Activated CD4-positive, alpha-beta T cell treated with anti-CD3 and anti-CD28 coated beads for 36 hours (primary cell): ENCODE measurements at regions of chr6 and their contacts with region 1.

Region 1: DNA sequence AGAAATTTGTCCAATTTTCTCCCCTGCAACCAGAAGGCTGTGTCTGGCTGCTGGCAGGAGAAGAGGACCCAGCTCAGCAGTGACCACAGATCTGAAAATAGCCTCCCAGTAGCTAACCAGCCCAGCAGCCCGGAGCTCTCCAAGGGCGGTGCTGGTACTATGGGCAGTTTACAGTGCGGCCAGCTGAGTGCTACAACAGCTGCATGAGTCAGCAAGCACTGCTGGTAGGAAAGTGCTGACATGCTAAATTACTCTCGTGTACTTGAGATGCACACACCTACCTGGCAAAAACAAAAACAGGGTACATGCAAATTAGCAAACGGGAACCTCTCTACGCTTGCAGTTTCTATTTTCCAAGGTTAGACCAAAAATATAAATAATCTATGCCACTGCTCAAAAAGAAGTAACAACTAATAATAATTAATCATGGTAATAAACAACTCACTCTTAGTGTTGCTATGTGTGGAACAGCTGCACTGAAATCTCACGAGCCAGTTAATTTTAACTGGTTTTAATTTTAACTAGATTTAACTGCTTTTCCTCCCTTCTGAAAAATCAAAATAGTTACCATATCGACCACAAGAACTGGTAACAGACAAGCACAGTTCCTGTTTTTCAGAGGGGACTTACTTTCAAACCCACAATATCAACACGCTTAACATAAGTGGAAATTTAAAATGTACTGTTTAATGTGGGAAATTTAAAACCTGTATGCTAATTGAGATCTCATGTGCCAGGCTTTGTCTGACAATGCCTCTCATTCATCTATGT is 10.8 kb downstream of the BACH2 start:
- DNase-seq: peak; percentile 75
- ATAC-seq: peak; percentile 40
- H3K4me3 Mint-ChIP-seq: peak overlapping the region; percentile 62
- H3K27ac Mint-ChIP-seq: peak overlapping the region; percentile 95
- H3K4me1 Mint-ChIP-seq: peaks cover 93% of the 10 kb centered on the region
- H3K27me3 Mint-ChIP-seq: no peaks in the 10 kb centered on the region

Region 2: DNA sequence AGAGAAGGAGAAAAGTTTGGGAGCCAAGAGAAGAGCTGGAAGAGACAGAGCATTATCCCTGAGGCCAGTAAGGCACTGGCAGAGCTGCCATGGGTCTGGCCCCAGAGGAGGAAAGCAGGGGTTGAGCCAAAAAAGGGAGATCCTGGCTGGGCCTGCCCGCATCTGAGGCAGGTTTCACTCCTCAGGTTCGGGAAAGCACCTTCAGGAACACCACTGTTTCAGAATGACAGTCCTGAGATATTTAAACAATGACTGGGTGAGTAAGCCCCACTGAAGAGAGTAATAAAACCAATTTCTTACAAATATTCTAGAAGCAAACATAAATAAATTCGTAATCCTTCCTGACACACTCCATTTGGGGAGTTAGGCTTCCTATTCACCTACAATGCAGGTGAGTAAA is 141.4 kb before region 1 on chr6:
- CTCF ChIA-PET with region 1: no interaction called
- POLR2A ChIA-PET with region 1: interaction called, 3 read pairs
- intact Hi-C with region 1: loop called in 1 of 2 experiments (anchors 1 kb)
- DNase-seq: peak; percentile 75
- ATAC-seq: peak; percentile 75
- H3K4me3 Mint-ChIP-seq: peak overlapping the region; percentile 32
- H3K27ac Mint-ChIP-seq: peak overlapping the region; percentile 95
- H3K4me1 Mint-ChIP-seq: peaks cover 81% of the 10 kb centered on the region
- H3K27me3 Mint-ChIP-seq: no peaks in the 10 kb centered on the region

Region 3: DNA sequence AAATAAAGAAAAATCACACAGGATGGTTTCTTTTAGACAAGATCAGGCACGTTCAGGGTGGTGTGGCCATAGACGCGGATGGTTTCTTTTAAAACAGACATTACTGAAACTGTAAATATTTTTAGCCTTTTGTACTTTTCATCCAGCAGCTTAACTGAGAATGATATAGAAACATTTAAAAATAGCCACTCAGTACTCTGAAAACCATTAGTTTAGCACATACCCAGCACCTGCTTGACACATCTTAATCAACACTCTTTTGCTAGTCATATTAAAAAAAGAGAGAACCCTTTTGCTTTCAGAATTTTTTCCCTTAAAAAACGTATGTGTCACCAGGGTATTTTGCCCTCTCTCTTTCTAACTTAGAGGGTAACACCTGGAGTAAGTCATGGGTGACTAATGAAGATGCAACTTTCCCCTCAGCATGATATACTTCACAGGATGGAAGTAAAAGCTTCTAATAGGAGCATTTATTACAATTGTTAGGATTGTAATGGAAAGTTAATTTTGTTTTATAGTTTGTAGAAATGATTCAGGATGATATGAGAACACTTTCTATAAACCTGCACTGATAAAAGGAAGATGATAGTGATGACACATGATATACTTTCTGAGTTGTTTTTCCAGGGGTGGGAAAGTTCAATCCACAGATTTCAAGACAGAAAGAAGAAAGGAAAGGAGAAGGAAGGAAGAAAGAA is 34.4 kb before region 1 on chr6:
- CTCF ChIA-PET with region 1: interaction called, 9 read pairs
- POLR2A ChIA-PET with region 1: interaction called, 9 read pairs
- intact Hi-C with region 1: loop called (anchors 1 kb)
- DNase-seq: no peak
- ATAC-seq: peak; percentile 72
- H3K4me3 Mint-ChIP-seq: peak overlapping the region; percentile 26
- H3K27ac Mint-ChIP-seq: peak overlapping the region; percentile 97
- H3K4me1 Mint-ChIP-seq: peaks cover 89% of the 10 kb centered on the region
- H3K27me3 Mint-ChIP-seq: no peaks in the 10 kb centered on the region

Region 4: DNA sequence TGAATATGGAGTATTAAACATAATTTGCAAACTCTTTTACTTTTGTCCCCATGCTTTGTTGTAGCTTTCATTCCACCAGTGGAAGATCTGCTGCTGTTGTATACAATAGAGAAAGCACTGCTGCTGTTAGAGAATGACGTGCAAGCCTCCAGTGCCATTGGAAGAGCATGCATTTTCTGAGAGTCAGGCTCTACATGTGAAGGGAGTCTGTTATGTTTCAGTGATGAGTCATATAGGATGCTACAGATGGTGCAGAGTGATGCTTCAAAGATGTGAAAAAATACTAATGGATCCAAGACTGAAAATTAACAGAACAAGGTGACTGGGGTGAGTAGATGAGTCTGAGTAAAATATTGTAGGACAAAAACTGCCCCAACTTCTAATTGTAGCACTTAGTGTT is 33.2 kb after region 1 on chr6:
- CTCF ChIA-PET with region 1: interaction called, 3 read pairs
- POLR2A ChIA-PET with region 1: interaction called, 4 read pairs
- intact Hi-C with region 1: loop called in 1 of 2 experiments (anchors 1 kb)
- DNase-seq: peak; percentile 40
- ATAC-seq: peak; percentile 82
- H3K4me3 Mint-ChIP-seq: no peak overlapping the region
- H3K27ac Mint-ChIP-seq: peak overlapping the region; percentile 80
- H3K4me1 Mint-ChIP-seq: peaks cover 43% of the 10 kb centered on the region
- H3K27me3 Mint-ChIP-seq: peaks cover 6% of the 10 kb centered on the region

Region 5: DNA sequence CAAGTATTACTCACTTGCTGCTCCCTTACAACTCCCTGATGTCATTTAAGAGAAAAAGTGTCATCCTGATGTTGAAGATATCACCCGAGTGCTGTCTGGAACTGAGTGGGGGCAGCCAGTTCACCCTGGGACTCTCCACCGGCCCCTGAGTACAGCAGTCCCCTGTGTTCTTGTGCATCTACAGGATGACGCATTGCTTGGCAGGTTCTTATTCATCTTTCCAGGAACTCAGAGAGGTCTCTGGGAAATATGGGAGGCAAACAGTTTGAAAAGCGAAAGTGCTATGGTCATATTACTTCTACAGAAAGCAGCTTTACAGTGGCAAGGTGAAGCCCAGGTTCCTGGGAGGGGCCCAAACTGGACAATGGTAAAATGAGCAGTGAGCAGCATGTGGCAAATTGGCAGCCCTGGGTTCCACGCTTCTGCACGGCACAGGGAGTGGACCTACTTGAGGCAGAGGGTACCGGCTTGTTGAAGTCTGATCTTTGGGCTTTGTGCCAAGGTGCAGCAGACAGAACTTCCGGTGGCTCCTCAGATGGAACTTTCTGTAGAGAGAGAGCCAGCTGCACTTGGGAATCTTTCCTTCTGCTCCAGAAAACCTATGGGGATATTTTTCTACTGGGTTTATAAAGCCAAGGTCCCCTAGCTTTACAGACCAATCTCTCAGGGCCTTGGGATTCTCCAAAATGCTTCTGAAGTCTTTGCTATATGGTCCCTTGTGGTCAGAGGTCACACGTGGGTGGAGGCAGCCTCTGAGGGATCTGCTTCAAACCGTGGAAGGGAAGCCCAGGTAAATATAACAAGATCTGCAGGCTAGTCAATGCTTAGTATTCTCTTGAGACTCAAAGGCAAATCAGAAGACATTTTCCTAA is 172.8 kb after region 1 on chr6:
- CTCF ChIA-PET with region 1: interaction called, 6 read pairs
- POLR2A ChIA-PET with region 1: interaction called, 9 read pairs
- intact Hi-C with region 1: loop called (anchors 1 kb)
- DNase-seq: peak; percentile 93
- ATAC-seq: peak; percentile 89
- H3K4me3 Mint-ChIP-seq: peak overlapping the region; percentile 63
- H3K27ac Mint-ChIP-seq: peak overlapping the region; percentile 99
- H3K4me1 Mint-ChIP-seq: peaks cover 92% of the 10 kb centered on the region
- H3K27me3 Mint-ChIP-seq: no peaks in the 10 kb centered on the region

Region 6: DNA sequence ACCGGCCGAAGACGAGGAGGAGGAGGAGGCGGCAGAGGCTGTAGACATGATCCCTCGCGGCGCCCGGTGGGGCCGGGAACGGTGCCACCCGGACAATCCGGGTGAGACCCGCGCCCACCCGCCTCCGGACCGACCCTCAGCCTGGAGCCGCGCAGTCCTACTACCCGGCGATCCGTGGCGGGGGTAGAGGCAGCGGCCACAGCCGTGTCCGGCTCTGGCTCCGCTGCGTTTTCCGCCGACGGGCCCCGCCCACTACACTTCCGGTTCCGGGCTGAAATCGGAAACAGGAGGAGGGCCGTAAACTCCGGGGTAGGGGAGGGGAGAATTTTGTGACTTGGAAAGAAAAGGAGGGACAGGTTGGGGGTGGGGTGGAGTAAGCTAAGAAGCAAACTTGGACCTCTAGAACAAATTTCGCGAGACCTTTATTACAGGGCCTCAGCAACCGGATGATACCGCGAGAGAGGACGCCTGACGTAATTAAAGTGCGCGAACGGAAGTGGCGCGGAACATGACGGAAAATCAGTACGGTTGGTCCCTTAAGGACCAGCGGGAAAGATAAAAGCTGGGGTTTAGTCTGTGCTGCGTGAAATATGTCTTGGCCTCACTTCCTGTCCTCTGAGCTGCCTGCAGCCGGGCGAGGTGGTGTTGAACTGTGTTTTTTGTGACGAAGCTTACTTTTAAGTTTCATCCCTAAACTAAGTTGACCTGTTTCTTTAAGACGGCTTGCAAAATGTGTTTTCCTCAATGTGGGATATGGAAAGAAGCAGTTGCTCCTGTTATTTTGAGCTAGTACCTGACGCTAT is 301.2 kb after region 1 on chr6 and contains the start of gene MAP3K7:
- CTCF ChIA-PET with region 1: interaction called, 3 read pairs
- POLR2A ChIA-PET with region 1: no interaction called
- intact Hi-C with region 1: loop called (anchors 1 to 5 kb)
- DNase-seq: peak; percentile 95
- ATAC-seq: peak; percentile 93
- H3K4me3 Mint-ChIP-seq: peak within 1 kb of the TSS; percentile 95
- H3K27ac Mint-ChIP-seq: peak within 1 kb of the TSS; percentile 98
- H3K4me1 Mint-ChIP-seq: peaks cover 40% of the 10 kb centered on the region
- H3K27me3 Mint-ChIP-seq: peaks cover 7% of the 10 kb centered on the region
- total RNA-seq, gene MAP3K7: 27.5 to 32.6 TPM

Region 7: GRCh38 chr6:90818163-90818562 is 532.4 kb after region 1 on chr6:
- CTCF ChIA-PET with region 1: no interaction called
- POLR2A ChIA-PET with region 1: no interaction called
- intact Hi-C with region 1: no loop called
- DNase-seq: no peak
- ATAC-seq: no peak
- H3K4me3 Mint-ChIP-seq: no peak overlapping the region
- H3K27ac Mint-ChIP-seq: no peak overlapping the region
- H3K4me1 Mint-ChIP-seq: no peaks in the 10 kb centered on the region
- H3K27me3 Mint-ChIP-seq: peaks cover 6% of the 10 kb centered on the region

Region 8: DNA sequence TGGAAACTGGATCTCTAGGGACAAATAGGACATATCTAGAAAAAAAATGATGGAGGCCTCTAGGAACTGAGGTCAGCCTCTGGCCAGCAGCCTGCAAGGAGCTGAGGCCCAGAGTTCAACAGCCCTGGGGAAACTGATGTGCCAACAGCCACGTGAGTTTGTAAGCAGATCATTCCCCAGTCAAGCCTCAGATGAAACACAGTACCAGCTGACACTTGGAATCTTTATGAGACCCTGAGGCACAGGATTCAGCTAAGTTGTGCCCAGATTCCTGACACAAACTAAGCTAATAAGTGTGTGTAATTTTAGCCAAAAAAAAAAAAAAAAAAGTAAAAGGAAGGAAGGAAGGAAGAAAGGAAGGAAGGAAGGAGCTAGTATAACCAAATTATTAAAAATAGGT is 1360.9 kb after region 1 on chr6:
- CTCF ChIA-PET with region 1: no interaction called
- POLR2A ChIA-PET with region 1: no interaction called
- intact Hi-C with region 1: no loop called
- DNase-seq: no peak
- ATAC-seq: no peak
- H3K4me3 Mint-ChIP-seq: no peak overlapping the region
- H3K27ac Mint-ChIP-seq: no peak overlapping the region
- H3K4me1 Mint-ChIP-seq: no peaks in the 10 kb centered on the region
- H3K27me3 Mint-ChIP-seq: no peaks in the 10 kb centered on the region